Thyroid gland (tissue), 4 donors: ENCODE measurements at regions of chr3 and their contacts with region 1.

Region 1: GRCh38 chr3:15205934-15206661 is at the start of gene CAPN7:
- DNase-seq: peak; percentile 97
- H3K4me3 ChIP-seq: peak within 1 kb of the TSS; percentile 70 to 99 (median 99)
- H3K27ac ChIP-seq: peak within 1 kb of the TSS; percentile 95 to 99 (median 97)
- H3K4me1 ChIP-seq: peaks cover 8 to 18% of the 10 kb centered on the region in 2 donors
- H3K27me3 ChIP-seq: no peaks in the 10 kb centered on the region
- CTCF ChIP-seq: peak in 3 of 6 experiments; percentile 39 to 56 (median 51)
- POLR2A ChIP-seq: peak; percentile 82 to 97
- total RNA-seq, gene CAPN7: 87.8 to 147 (median 116) TPM

Region 2: DNA sequence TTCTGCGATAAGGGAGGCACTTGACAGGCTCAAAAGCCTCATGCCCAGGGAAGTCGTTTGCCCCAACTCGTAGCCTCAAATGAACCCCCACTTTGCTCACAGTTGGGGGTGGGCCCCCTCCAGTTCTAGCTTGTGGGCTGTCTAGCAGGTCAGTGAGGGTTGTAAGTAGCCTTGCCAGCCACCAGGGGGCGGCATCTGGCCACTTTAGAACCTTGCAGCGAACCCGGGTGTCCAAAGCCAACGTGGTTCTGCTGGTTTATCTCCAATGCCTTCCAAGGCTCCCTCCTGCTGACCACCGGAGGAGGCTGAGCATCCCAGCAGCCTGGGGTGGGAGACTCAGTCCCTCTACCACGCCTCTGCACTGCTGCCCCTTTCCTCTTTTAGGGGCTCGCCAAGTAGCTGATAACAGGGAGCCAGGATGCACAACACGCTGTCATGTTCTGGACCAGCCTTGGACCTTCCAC is 98.0 kb before region 1 on chr3:
- intact Hi-C with region 1: loop called (anchors 10 kb)
- DNase-seq: peak; percentile 62 to 70
- H3K4me3 ChIP-seq: no peak overlapping the region
- H3K27ac ChIP-seq: no peak overlapping the region
- H3K4me1 ChIP-seq: peaks cover 0 to 5% of the 10 kb centered on the region in 2 donors
- H3K27me3 ChIP-seq: no peaks in the 10 kb centered on the region
- CTCF ChIP-seq: peak; percentile 57 to 95 (median 74)
- POLR2A ChIP-seq: no peak

Region 3: GRCh38 chr3:15409239-15410168 is 203.4 kb after region 1 on chr3:
- intact Hi-C with region 1: loop called (anchors 5 kb)
- DNase-seq: no peak
- H3K4me3 ChIP-seq: no peak overlapping the region
- H3K27ac ChIP-seq: no peak overlapping the region
- H3K4me1 ChIP-seq: no peaks in the 10 kb centered on the region
- H3K27me3 ChIP-seq: no peaks in the 10 kb centered on the region
- CTCF ChIP-seq: no peak
- POLR2A ChIP-seq: no peak